Esophagus muscularis mucosa (tissue), 4 donors: ENCODE measurements at regions of chr3 and their contacts with region 1.

Region 1: DNA sequence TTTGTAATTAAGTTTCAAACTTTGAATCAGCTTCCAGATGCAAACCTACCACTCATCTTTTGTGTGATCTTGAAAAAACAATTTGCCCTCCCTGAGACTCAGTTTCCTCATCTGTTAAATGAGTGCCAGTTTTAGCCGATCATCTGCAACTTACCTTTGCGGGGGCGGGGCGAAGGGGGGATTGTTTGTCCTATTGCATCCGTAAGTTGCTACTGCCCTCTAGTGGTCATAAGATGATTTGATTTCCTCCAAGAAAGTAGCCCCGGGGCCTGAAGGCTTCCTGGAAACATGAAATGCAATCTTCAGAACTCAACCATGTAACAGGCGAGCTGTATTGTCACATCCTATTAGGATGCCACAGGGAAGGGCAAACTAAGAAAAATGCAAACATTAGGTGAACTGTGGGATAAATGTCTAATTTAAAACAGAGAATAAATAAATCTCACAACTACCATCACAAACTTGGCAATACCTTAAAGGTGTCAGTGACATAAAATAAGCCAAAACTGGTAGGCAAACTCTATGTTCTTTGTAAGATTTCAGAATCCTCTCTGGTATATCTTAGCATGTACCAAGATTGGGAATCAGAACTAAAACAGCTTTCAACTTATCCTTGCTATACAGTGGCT is 63.5 kb upstream of the CLDN18 start:
- DNase-seq: peak; percentile 91
- H3K4me3 ChIP-seq: no peak overlapping the region
- H3K27ac ChIP-seq: no peak overlapping the region
- H3K4me1 ChIP-seq: peaks cover 0 to 6% (median 0%) of the 10 kb centered on the region in 4 donors
- H3K27me3 ChIP-seq: no peaks in the 10 kb centered on the region
- CTCF ChIP-seq: peak; percentile 53 to 70 (median 53)
- EP300 ChIP-seq: no peak
- POLR2A ChIP-seq: no peak

Region 2: DNA sequence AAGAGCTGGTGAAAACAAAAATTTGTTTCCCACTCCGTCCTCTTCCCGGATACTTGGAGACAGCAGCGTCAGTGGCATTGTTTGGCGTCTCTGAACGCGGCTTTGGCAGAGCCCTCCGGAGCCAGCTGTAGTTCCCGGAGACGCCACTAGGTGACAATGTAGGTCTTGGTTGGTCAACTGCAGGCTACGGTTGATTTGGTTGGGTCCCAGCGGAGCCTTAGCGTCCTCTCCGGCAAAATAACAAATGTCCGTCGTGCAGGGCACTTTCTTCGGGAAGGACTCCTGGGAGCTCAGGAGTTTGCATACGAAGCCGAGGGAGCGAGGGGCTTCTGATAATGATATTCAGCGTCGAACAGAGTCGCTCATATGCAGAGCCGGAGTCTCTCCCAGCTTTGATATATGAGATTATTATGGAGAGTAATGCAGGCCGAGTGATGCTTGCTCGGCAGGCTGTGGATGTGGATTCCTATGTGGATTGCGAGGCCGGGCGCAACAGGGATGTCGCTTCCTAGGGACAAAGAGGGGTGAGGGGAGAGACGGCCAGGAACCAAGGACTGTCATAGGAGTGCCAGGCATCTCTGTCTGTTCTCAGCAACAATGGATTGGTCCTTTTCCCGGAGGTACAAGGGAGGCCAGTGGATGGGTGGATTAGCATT is 913.9 kb before region 1 on chr3:
- intact Hi-C with region 1: loop called (anchors 5 kb)
- DNase-seq: peak; percentile 95
- H3K4me3 ChIP-seq: peak overlapping the region; percentile 35 to 56 (median 39)
- H3K27ac ChIP-seq: no peak overlapping the region
- H3K4me1 ChIP-seq: peaks cover 4 to 12% (median 10%) of the 10 kb centered on the region in 4 donors
- H3K27me3 ChIP-seq: no peaks in the 10 kb centered on the region
- CTCF ChIP-seq: peak; percentile 86 to 100 (median 94)
- EP300 ChIP-seq: no peak
- POLR2A ChIP-seq: no peak